ENCODE measurements at regions of chr13 and their contacts with region 1.

Region 1: GRCh38 chr13:38824342-38824741 is 137.5 kb downstream of the FREM2 start:
- DNase-seq: no peak

Region 2: DNA sequence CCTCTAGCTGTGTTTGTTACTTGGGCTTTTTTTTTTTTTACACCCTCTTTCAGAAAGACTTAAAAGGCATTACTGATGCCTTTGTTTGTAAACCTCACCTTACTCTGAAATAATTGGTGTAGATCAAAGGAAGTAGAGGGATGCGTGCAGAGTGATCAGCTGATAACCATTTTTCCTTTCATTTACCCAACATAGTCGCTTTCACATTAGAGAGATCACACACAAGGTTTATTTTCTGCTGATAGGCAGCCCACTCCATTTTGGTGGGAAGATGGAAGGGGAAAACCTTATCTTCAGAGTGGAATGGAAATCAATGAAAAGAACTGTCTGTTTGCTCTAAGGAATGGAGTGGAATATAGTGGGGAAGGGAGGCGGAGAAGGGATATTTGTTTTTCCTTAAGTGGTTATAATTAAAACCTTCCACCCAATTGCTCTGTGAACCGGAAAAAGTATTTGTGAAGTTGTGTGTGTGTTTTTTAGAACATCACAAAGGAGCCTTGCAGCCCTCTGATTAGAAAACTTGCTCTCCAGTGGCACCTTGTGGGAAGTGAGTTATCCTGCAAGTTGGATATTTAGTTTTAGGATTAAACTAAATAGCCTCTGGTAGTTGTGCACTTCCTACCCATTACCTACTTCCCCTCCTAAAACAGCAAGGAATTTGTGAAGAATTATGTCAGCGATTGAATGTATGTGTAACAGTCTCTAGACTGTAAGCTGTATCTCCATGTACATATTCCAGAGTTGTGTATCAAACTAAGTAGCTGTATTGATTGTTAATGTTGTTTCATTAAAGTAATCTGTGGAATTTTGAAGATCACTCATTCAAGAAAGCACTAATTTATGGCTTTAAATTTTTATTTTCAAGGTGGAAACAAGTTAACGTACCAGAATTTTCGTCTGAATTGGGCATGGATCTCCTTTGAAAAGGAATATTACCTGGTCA is 60.6 kb before region 1 on chr13:
- intact Hi-C with region 1: loop called (anchors 5 kb)
- DNase-seq: peak in 32 of 42 donors; percentile 16 to 82 (median 56)